Activated CD8-positive, alpha-beta memory T cell treated with anti-CD3 and anti-CD28 coated beads, Interleukin-2, amount 10 ng/mL, durations not matched to agents 7 days and 5 days (primary cell): ENCODE measurements at regions of chr17 and their contacts with region 1.

Region 1: GRCh38 chr17:74659898-74660297 is 36.4 kb upstream of the CD300E start:
- DNase-seq: no peak
- ATAC-seq: no peak
- H3K4me3 Mint-ChIP-seq: no peak overlapping the region
- H3K27ac Mint-ChIP-seq: no peak overlapping the region
- H3K4me1 Mint-ChIP-seq: peaks cover 7% of the 10 kb centered on the region
- H3K27me3 Mint-ChIP-seq: peaks cover 62% of the 10 kb centered on the region

Region 2: GRCh38 chr17:74566132-74566753 is 93.7 kb before region 1 on chr17:
- CTCF ChIA-PET with region 1: interaction called, 22 read pairs
- DNase-seq: peak; percentile 53
- ATAC-seq: peak; percentile 45
- H3K4me3 Mint-ChIP-seq: no peak overlapping the region
- H3K27ac Mint-ChIP-seq: no peak overlapping the region
- H3K4me1 Mint-ChIP-seq: peaks cover 10% of the 10 kb centered on the region
- H3K27me3 Mint-ChIP-seq: peaks cover 43% of the 10 kb centered on the region

Region 3: DNA sequence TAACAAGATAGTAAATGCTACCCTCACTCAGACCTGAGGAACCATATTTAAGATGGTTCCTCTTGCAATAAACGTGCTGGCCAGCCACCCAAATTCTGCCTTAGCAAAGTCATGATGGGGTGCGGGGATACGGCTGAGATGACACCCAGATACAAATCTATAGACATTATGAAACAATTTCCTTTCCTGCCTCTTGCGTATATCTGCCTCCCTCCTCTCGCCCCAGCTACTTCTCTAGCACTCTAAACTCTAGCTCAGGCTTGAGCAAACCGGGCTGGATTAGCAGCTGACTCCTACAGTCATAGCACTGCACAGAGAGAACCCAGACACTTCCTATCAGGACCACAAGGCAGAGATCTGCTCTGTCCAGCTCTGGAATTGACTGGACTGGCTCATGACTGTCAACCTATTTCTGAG is 30.5 kb after region 1 on chr17:
- CTCF ChIA-PET with region 1: interaction called, 12 read pairs
- DNase-seq: peak; percentile 58
- ATAC-seq: peak; percentile 57
- H3K4me3 Mint-ChIP-seq: no peak overlapping the region
- H3K27ac Mint-ChIP-seq: peak overlapping the region; percentile 46
- H3K4me1 Mint-ChIP-seq: peaks cover 26% of the 10 kb centered on the region
- H3K27me3 Mint-ChIP-seq: peaks cover 24% of the 10 kb centered on the region

Region 4: DNA sequence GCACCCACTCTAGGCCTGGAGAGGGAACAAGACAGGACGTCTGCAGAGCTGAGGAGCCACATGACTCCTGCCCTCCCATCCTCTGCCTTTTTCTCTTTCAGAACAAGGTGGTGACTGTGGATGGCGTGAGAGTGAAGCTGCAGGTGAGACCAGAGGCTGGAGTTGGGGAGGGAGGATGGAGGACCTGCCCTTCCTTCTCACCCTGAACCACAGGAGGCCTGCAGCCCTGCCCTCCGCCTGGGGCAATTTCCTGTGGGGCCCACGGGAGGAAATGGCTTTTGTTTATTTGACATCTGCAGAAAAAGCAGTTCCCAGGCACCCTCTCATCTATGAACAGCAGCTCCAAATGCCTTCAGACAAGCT is 82.2 kb after region 1 on chr17:
- CTCF ChIA-PET with region 1: interaction called, 262 read pairs
- DNase-seq: peak; percentile 88
- ATAC-seq: peak; percentile 30
- H3K4me3 Mint-ChIP-seq: peak overlapping the region; percentile 43
- H3K27ac Mint-ChIP-seq: peak overlapping the region; percentile 91
- H3K4me1 Mint-ChIP-seq: peaks cover 84% of the 10 kb centered on the region
- H3K27me3 Mint-ChIP-seq: no peaks in the 10 kb centered on the region

Region 5: GRCh38 chr17:74770498-74771318 is 110.8 kb after region 1 on chr17:
- CTCF ChIA-PET with region 1: interaction called, 25 read pairs
- DNase-seq: peak; percentile 81
- ATAC-seq: peak; percentile 78
- H3K4me3 Mint-ChIP-seq: no peak overlapping the region
- H3K27ac Mint-ChIP-seq: peak overlapping the region; percentile 67
- H3K4me1 Mint-ChIP-seq: peaks cover 28% of the 10 kb centered on the region
- H3K27me3 Mint-ChIP-seq: no peaks in the 10 kb centered on the region

Region 6: GRCh38 chr17:74864866-74865395 is 205.0 kb after region 1 on chr17:
- CTCF ChIA-PET with region 1: interaction called, 10 read pairs
- DNase-seq: peak; percentile 78
- ATAC-seq: peak; percentile 60
- H3K4me3 Mint-ChIP-seq: no peak overlapping the region
- H3K27ac Mint-ChIP-seq: no peak overlapping the region
- H3K4me1 Mint-ChIP-seq: peaks cover 12% of the 10 kb centered on the region
- H3K27me3 Mint-ChIP-seq: peaks cover 20% of the 10 kb centered on the region